CD8-positive, alpha-beta memory T cell (primary cell): ENCODE measurements at regions of chr13 and their contacts with region 1.

Region 1: GRCh38 chr13:49606747-49607648 is 21.3 kb upstream of the ARL11 start:
- DNase-seq: peak; percentile 65 to 86 (median 71)
- H3K4me3 ChIP-seq: peak overlapping the region; percentile 59
- H3K4me3 Mint-ChIP-seq: peak overlapping the region; percentile 43 to 92 (median 86)
- H3K27ac ChIP-seq: no peak overlapping the region
- H3K27ac Mint-ChIP-seq: peak overlapping the region in 6 of 8 donors; percentile 45 to 91 (median 79)
- H3K4me1 ChIP-seq: no peaks in the 10 kb centered on the region
- H3K4me1 Mint-ChIP-seq: peaks cover 2 to 4% (median 4%) of the 10 kb centered on the region in 3 donors
- H3K27me3 ChIP-seq: no peaks in the 10 kb centered on the region
- H3K27me3 Mint-ChIP-seq: peaks cover 0 to 2% of the 10 kb centered on the region in 2 donors

Region 2: GRCh38 chr13:49295244-49295643 is 311.8 kb before region 1 on chr13:
- CTCF ChIA-PET with region 1: interaction called, 67 read pairs
- POLR2A ChIA-PET with region 1: no interaction called
- DNase-seq: no peak
- H3K4me3 ChIP-seq: no peak overlapping the region
- H3K4me3 Mint-ChIP-seq: no peak overlapping the region
- H3K27ac ChIP-seq: no peak overlapping the region
- H3K27ac Mint-ChIP-seq: peak overlapping the region in 2 of 8 donors; percentile 5 to 58
- H3K4me1 ChIP-seq: no peaks in the 10 kb centered on the region
- H3K4me1 Mint-ChIP-seq: peaks cover 5 to 8% (median 6%) of the 10 kb centered on the region in 3 donors
- H3K27me3 ChIP-seq: no peaks in the 10 kb centered on the region
- H3K27me3 Mint-ChIP-seq: no peaks in the 10 kb centered on the region

Region 3: GRCh38 chr13:49300739-49301589 is 306.0 kb before region 1 on chr13:
- CTCF ChIA-PET with region 1: interaction called, 67 read pairs
- POLR2A ChIA-PET with region 1: no interaction called
- DNase-seq: peak; percentile 42 to 74 (median 69)
- H3K4me3 ChIP-seq: peak overlapping the region; percentile 53
- H3K4me3 Mint-ChIP-seq: peak overlapping the region; percentile 3 to 93 (median 80)
- H3K27ac ChIP-seq: no peak overlapping the region
- H3K27ac Mint-ChIP-seq: peak overlapping the region in 7 of 8 donors; percentile 55 to 92 (median 81)
- H3K4me1 ChIP-seq: peaks cover 6% of the 10 kb centered on the region
- H3K4me1 Mint-ChIP-seq: peaks cover 4 to 12% (median 6%) of the 10 kb centered on the region in 3 donors
- H3K27me3 ChIP-seq: no peaks in the 10 kb centered on the region
- H3K27me3 Mint-ChIP-seq: no peaks in the 10 kb centered on the region

Region 4: DNA sequence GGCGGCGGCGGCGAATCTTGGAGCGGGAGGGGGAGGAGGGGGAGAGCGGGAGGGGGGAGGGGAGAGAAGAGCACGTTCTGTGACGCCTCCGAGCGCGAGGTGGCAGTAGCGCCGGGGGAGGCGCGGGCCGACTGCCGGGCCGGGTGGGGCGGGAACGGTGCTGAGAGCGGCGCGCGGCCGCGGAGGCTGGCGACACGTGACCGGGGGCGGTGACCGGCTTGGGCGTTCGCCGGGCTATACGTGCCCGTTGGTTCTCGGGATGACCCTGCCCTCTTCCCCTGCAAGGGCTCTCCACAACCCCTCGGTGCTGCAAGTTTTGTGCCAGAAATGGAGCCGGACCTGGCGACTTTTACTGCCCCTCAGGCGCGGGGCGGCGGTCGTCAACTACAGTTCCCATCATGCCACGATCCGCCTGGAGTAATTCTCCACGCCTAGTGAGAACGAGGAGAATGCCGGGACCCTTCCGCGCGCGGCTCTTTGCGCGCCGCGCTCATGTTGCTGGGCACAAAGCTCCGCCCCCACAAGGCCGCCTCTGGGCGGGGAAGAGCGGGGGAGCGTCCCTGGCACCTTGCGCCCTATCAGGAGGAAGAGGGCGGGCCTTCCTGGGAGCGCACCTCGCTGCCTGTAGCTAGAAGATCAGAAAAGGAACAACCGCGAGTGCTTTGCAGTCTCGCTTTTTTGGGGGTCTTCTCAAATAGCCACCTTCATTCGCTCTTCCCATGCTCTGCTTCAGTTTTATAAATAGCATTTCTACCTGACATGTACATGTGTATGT is 185.7 kb after region 1 on chr13 and contains the start of gene KPNA3:
- CTCF ChIA-PET with region 1: no interaction called
- POLR2A ChIA-PET with region 1: interaction called, 14 read pairs
- DNase-seq: peak; percentile 91 to 97 (median 93)
- H3K4me3 ChIP-seq: peak within 1 kb of the TSS; percentile 91
- H3K4me3 Mint-ChIP-seq: peak within 1 kb of the TSS; percentile 96 to 99 (median 98)
- H3K27ac ChIP-seq: peak within 1 kb of the TSS; percentile 75
- H3K27ac Mint-ChIP-seq: peak within 1 kb of the TSS; percentile 95 to 99 (median 97)
- H3K4me1 ChIP-seq: peaks cover 34% of the 10 kb centered on the region
- H3K4me1 Mint-ChIP-seq: peaks cover 33 to 40% (median 38%) of the 10 kb centered on the region in 3 donors
- H3K27me3 ChIP-seq: no peaks in the 10 kb centered on the region
- H3K27me3 Mint-ChIP-seq: no peaks in the 10 kb centered on the region
- total RNA-seq, gene KPNA3: 62.7 to 62.8 TPM